ENCODE measurements at regions of chr2 and their contacts with region 1.

Region 1: GRCh38 chr2:176126929-176127773 is 2.4 kb upstream of the HOXD8 start:
- DNase-seq: peak; percentile 58
- ATAC-seq: peak; percentile 40; the same call in 1 of the 2 replicates
- H3K4me3 ChIP-seq: no peak overlapping the region
- H3K27ac ChIP-seq: no peak overlapping the region
- H3K4me1 ChIP-seq: no peaks in the 10 kb centered on the region
- H3K27me3 ChIP-seq: peaks cover 88% of the 10 kb centered on the region
- CTCF ChIP-seq: peak; percentile 92
- POLR2A ChIP-seq: no peak
- RAD21 ChIP-seq: peak; percentile 89

Region 2: GRCh38 chr2:176454893-176455811 is 328.0 kb after region 1 on chr2:
- CTCF ChIA-PET with region 1: interaction called, 9 read pairs
- POLR2A ChIA-PET with region 1: no interaction called
- dilution Hi-C with region 1: no loop called
- in situ Hi-C with region 1: loop called (anchors 10 kb)
- intact Hi-C with region 1: no loop called
- DNase-seq: peak; percentile 65
- ATAC-seq: peak; percentile 98
- H3K4me3 ChIP-seq: no peak overlapping the region
- H3K27ac ChIP-seq: no peak overlapping the region
- H3K4me1 ChIP-seq: no peaks in the 10 kb centered on the region
- H3K27me3 ChIP-seq: peaks cover 1% of the 10 kb centered on the region; the same call in 1 of the 2 replicates
- CTCF ChIP-seq: peak; percentile 86
- POLR2A ChIP-seq: no peak
- RAD21 ChIP-seq: peak; percentile 83

Region 3: DNA sequence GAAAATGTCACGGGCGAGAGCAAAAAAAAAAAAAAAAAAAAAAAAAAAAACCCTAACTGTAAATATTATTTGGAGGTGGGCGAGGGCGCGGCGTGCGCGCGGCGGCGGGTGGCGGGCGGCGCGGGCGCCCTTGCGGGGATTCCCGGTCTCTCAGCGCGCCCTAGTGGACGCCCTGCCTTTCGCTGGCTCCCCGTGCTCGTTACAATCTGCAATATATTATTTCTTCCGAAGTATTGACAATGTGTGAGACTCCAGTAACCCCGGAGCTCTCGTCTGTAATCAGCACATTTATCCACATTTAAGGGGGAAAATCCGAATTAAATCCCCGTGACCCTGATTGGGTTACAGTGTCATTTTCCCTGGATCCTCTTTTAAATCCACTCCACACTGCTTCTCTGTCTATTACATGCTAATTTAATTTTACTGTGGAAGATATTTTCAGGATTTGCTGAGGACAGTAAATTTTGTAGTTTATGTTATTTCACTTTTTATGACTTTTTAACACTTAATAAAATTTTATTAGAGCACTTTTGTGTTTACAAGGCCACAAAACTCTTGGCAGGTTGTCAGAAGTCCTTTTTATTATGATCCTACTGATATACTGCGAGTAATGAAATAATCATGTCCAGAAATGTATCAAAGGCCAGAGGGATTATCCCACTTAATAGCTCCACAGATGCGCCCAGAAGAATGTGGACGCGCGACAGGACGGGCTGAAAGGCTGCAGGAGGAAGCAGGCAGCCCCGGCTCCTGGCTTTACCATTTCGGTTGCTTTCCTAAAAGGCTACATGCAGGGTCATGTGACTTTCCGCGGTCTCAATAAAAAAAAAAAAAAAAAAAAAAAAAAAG is 511.2 kb after region 1 on chr2:
- CTCF ChIA-PET with region 1: interaction called, 23 read pairs
- POLR2A ChIA-PET with region 1: no interaction called
- dilution Hi-C with region 1: no loop called
- in situ Hi-C with region 1: loop called (anchors 5 kb)
- intact Hi-C with region 1: loop called (anchors 1 kb)
- DNase-seq: peak; percentile 45
- ATAC-seq: peak; percentile 92
- H3K4me3 ChIP-seq: peak overlapping the region; percentile 38
- H3K27ac ChIP-seq: no peak overlapping the region
- H3K4me1 ChIP-seq: no peaks in the 10 kb centered on the region
- H3K27me3 ChIP-seq: peaks cover 33% of the 10 kb centered on the region
- CTCF ChIP-seq: peak; percentile 93
- POLR2A ChIP-seq: no peak
- RAD21 ChIP-seq: peak; percentile 92

Region 4: DNA sequence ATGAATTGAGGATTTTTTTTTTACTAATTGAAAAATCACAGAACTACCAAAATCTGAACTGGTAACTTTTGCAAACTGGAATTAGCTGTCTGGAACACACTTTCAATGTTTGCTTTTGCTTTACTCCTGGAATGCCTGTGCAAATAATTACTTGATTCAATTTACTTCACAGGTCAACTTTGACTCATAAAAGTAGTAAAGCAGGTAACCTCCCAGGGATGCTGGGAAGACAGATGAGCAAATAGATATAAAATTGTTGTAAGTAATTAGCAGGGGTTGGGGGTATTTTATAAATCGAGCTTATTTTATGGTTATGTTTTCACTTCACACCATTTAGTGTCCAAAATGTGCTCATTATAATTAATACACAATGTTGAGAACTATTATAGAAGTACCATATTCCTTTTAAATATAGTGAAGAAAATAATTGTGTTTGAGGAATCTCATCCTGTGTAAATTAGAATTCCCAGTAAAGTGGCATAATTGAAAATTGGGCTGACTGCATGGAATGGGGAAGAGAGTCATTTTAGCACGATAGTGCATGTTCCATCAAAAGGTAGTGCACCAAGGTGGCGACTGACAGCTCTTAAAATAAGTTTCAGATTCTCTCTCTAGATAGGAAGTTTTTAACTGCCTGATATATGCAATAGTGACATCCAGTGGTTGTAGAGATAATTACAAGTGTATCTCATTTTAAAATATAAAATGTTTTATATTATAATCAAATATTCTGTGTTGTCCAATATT is 687.3 kb after region 1 on chr2:
- CTCF ChIA-PET with region 1: interaction called, 13 read pairs
- POLR2A ChIA-PET with region 1: no interaction called
- dilution Hi-C with region 1: no loop called
- in situ Hi-C with region 1: loop called (anchors 5 kb)
- intact Hi-C with region 1: loop called (anchors 1 kb)
- DNase-seq: peak; percentile 26
- ATAC-seq: peak; percentile 66
- H3K4me3 ChIP-seq: no peak overlapping the region
- H3K27ac ChIP-seq: no peak overlapping the region
- H3K4me1 ChIP-seq: no peaks in the 10 kb centered on the region
- H3K27me3 ChIP-seq: no peaks in the 10 kb centered on the region; the same call in 1 of the 2 replicates
- CTCF ChIP-seq: peak; percentile 52
- POLR2A ChIP-seq: no peak
- RAD21 ChIP-seq: peak; percentile 34

Region 5: DNA sequence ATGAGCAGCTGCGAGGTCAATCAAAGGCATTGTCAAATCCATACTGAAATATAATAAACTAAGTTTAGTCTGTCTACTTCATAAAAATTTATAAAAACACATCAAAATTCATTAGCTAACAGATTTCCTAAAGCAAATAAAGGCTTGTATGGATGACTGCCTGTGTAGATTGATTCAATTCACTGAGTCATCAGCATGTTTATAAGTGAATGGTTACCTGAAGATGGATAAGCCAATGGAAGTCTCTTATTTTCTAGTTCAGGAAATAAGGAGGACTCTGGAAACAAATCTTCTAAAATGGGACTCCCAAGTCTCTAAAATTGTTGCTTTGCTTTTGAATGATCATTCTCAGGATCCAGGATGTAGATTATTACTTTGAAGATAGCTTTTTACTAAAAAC is 1028.5 kb after region 1 on chr2:
- CTCF ChIA-PET with region 1: interaction called, 5 read pairs
- POLR2A ChIA-PET with region 1: no interaction called
- dilution Hi-C with region 1: no loop called
- in situ Hi-C with region 1: loop called (anchors 10 kb)
- intact Hi-C with region 1: no loop called
- DNase-seq: no peak
- ATAC-seq: no peak
- H3K4me3 ChIP-seq: no peak overlapping the region
- H3K27ac ChIP-seq: no peak overlapping the region
- H3K4me1 ChIP-seq: no peaks in the 10 kb centered on the region
- H3K27me3 ChIP-seq: peaks cover 10% of the 10 kb centered on the region
- CTCF ChIP-seq: no peak
- POLR2A ChIP-seq: no peak
- RAD21 ChIP-seq: no peak